GM10248 (cell line): ENCODE measurements at regions of chr7 and their contacts with region 1.

Region 1: DNA sequence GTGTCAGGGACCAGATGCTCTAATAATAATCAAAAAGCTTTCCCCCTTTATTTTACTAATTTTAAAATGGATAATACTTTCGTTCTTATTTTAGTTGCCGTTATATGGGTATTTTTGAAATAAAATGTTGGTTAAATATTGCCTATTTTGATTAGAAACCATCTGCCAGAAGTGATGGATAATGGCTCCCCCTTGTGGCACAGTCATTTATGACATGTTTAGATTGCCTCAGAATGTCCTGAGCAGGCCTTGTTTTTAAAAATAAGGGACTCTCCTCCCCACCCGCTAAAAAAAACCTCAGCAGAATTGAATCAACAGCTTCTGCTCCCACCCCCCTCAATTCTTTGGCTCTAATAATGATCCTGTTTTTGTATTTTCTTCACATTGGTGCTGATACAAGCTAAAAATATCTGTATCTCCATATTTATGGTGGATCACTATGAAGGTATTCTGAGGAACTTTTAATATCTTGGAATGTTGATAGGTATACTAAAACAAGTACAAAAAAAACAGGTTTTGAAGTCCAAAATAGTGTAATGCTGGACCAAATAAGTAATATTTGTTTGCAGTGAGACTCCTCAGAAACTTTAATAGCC is 38.8 kb downstream of the TMEM60 start:
- DNase-seq: peak; percentile 34
- CTCF ChIP-seq: peak; percentile 78

Region 2: GRCh38 chr7:77657427-77658224 is 101.8 kb before region 1 on chr7:
- CTCF ChIA-PET with region 1: interaction called, 43 read pairs
- POLR2A ChIA-PET with region 1: no interaction called
- DNase-seq: peak; percentile 51
- CTCF ChIP-seq: peak; percentile 53

Region 3: DNA sequence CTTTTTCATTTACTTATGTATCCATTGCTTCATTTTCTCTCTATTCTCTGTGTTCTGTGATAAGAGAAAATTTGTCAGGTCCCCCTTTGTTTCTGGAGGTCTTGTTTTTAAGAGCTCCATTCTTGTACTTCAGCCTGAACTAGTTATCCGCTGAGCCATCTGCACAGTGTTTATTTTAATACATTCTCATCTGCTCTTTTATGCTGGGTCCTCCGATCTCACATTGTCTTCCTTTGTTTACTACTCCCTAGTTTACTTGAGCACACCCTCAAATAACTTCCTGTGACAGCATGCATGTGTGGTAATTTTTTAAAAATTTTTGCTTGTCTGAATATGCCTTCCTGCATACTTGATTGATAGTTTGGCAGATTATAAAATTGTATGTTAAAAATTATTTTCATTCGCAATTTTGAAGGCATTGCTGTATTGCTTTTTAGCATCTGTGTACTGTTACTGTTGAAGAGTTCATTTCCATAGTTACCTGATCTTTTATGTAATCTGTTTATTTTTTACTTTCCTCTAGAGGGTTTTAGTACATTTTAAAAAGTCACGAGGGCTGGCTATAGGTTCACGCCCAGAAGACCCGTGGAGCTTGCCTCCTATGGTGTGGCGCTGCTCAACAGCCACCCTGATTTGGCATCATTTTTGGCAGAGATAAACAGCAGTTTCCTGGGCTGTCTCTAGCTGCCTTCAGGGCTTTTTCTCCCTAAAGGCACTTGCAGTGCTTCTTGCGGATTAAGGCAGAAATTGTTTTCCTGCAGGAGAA is 31.3 kb before region 1 on chr7:
- CTCF ChIA-PET with region 1: interaction called, 19 read pairs
- POLR2A ChIA-PET with region 1: no interaction called
- DNase-seq: no peak
- CTCF ChIP-seq: no peak

Region 4: GRCh38 chr7:77747178-77747577 is 12.2 kb before region 1 on chr7:
- CTCF ChIA-PET with region 1: interaction called, 30 read pairs
- POLR2A ChIA-PET with region 1: no interaction called
- DNase-seq: no peak
- CTCF ChIP-seq: no peak

Region 5: GRCh38 chr7:77771901-77772300 is 12.5 kb after region 1 on chr7:
- CTCF ChIA-PET with region 1: interaction called, 12 read pairs
- POLR2A ChIA-PET with region 1: no interaction called
- DNase-seq: no peak
- CTCF ChIP-seq: no peak

Region 6: GRCh38 chr7:78164459-78164858 is 405.1 kb after region 1 on chr7:
- CTCF ChIA-PET with region 1: no interaction called
- POLR2A ChIA-PET with region 1: no interaction called
- DNase-seq: no peak
- CTCF ChIP-seq: no peak